AG04449 (cell line): ENCODE measurements at regions of chr6 and their contacts with region 1.

Region 1: DNA sequence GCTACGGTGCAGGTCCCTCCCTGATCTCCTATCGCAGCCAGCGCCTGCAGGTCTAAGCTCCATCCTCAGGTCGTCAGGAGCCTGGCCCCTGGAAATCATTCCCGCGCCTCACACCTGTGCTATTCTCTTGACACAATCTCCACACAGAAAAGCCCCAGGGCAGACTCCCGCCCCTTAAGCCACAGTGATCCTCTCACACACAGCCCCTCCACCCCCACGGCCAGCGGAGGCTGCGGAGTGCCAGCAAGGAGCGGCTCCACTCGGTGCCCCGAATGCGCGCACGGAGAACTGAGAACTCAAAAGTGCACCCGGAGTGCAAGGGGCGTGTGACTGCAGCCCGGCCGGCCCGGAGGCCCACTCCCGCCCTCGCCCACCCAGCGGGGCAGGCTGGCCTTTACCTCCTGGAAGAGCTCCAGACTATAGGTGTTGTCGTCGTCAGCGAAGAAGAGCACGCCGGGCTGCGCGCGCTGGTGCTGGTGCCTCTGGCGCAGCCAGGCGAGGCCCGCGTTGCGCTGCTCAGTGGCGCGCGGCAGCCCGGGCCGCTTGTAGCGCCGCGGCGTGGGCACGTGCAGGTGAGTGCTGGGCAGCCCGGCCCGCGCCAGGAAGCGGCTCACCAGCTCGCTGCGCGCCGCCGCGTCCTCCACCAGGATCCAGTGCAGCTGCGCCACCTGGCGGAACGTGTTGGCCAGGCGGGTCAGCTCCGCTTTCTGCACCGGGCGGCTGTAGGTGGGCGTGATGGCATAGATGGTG is 1.2 kb downstream of the B3GAT2 start:
- DNase-seq: no peak
- H3K4me3 ChIP-seq: peak overlapping the region; percentile 46
- CTCF ChIP-seq: peak; percentile 98

Region 2: DNA sequence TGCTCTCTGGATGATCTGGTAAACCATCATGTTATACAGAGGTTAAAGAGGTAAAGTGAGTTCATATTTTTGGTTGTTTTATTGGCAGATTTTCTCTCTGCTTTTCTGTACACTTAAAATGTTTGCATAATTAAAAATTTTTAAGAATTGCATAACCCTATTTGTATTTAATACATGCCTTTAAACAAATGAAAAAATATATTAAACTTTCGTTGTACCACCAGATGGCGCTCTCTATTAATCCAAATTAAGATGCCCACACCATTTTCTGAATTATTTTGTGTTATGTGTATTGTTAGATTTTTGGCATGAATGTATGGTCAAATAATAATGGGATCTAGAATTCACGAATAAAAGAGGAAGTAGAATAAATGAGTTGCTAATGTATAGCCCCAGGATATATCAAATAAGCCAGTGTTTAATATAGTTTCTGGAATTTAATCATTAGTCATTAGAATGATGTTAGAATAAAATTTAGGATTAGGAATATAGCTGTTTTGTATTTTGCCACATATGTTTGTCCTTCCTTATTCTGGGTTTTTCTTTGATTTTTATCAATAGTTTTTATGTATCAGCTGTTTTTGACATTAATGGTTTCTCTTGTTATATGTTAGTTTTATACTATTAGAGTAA is 249.0 kb before region 1 on chr6:
- CTCF ChIA-PET with region 1: interaction called, 29 read pairs
- POLR2A ChIA-PET with region 1: no interaction called
- DNase-seq: no peak
- H3K4me3 ChIP-seq: no peak overlapping the region
- CTCF ChIP-seq: no peak